Calu3 (cell line): ENCODE measurements at regions of chr20 and their contacts with region 1.

Region 1: GRCh38 chr20:5529331-5530148 is 212.8 kb upstream of the PROKR2 start:
- DNase-seq: peak; percentile 82
- H3K4me3 Mint-ChIP-seq: peak overlapping the region; percentile 40
- H3K27ac Mint-ChIP-seq: no peak overlapping the region
- H3K4me1 Mint-ChIP-seq: peaks cover 8% of the 10 kb centered on the region
- H3K27me3 Mint-ChIP-seq: no peaks in the 10 kb centered on the region
- CTCF ChIP-seq: peak; percentile 37

Region 2: GRCh38 chr20:5430670-5431069 is 98.9 kb before region 1 on chr20:
- CTCF ChIA-PET with region 1: no interaction called
- intact Hi-C with region 1: no loop called
- DNase-seq: no peak
- H3K4me3 Mint-ChIP-seq: no peak overlapping the region
- H3K27ac Mint-ChIP-seq: no peak overlapping the region
- H3K4me1 Mint-ChIP-seq: peaks cover 1% of the 10 kb centered on the region
- H3K27me3 Mint-ChIP-seq: peaks cover 36% of the 10 kb centered on the region
- CTCF ChIP-seq: no peak

Region 3: GRCh38 chr20:5950271-5951031 is 420.9 kb after region 1 on chr20 and contains the starts of genes MCM8 and TRMT6:
- CTCF ChIA-PET with region 1: no interaction called
- intact Hi-C with region 1: no loop called
- DNase-seq: peak; percentile 92
- H3K4me3 Mint-ChIP-seq: peak within 1 kb of the TSS; percentile 97
- H3K27ac Mint-ChIP-seq: peak within 1 kb of the TSS; percentile 94
- H3K4me1 Mint-ChIP-seq: peaks cover 8% of the 10 kb centered on the region
- H3K27me3 Mint-ChIP-seq: no peaks in the 10 kb centered on the region
- CTCF ChIP-seq: no peak
- total RNA-seq, gene MCM8: 18.4 and 20.6 TPM in 2 replicates
- total RNA-seq, gene TRMT6: 14.2 and 15.5 TPM in 2 replicates

Region 4: DNA sequence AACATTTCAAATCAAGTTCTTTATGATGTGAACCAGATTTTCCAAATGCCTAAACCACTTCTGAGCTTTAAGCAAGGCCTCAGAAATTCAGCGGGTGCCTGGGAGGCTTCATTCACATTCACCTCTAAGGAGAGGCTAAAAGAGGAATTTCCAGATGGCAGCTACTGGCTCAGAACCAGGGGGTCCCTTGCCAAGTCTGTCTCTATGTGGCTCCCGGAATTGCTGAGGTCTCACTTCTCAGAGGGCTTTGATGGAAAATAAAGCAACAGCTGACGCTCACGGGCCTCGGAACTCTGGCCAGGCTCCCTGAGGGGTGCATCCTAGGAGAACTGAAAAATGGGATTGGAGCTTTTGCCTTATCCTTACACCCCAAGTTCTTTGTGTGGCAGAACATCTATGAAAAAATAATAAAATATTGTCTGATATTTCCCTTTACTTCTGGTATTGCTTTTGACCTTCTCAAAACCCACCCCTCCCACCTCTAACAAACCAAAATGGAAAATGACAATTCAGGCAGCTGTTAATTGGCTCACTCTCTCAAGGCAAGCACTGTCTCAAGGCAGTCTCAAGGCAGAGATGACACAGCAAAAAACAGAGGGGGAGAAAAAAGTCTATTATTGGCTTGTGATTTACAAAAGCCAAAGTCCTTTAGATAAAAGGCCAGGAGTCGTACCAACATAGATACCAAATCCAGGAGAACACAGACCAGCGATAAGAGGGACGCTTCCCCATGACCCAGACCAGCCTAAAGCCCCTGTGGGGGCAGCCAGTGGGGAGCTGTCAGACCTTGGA is 546.1 kb after region 1 on chr20:
- CTCF ChIA-PET with region 1: interaction called, 5 read pairs
- intact Hi-C with region 1: loop called (anchors 2 kb)
- DNase-seq: no peak
- H3K4me3 Mint-ChIP-seq: no peak overlapping the region
- H3K27ac Mint-ChIP-seq: no peak overlapping the region
- H3K4me1 Mint-ChIP-seq: no peaks in the 10 kb centered on the region
- H3K27me3 Mint-ChIP-seq: no peaks in the 10 kb centered on the region
- CTCF ChIP-seq: no peak